GM10248 (cell line): ENCODE measurements at regions of chr9 and their contacts with region 1.

Region 1: GRCh38 chr9:136671646-136672430 is 9.1 kb downstream of the EGFL7 start:
- DNase-seq: peak; percentile 81
- CTCF ChIP-seq: peak; percentile 94

Region 2: DNA sequence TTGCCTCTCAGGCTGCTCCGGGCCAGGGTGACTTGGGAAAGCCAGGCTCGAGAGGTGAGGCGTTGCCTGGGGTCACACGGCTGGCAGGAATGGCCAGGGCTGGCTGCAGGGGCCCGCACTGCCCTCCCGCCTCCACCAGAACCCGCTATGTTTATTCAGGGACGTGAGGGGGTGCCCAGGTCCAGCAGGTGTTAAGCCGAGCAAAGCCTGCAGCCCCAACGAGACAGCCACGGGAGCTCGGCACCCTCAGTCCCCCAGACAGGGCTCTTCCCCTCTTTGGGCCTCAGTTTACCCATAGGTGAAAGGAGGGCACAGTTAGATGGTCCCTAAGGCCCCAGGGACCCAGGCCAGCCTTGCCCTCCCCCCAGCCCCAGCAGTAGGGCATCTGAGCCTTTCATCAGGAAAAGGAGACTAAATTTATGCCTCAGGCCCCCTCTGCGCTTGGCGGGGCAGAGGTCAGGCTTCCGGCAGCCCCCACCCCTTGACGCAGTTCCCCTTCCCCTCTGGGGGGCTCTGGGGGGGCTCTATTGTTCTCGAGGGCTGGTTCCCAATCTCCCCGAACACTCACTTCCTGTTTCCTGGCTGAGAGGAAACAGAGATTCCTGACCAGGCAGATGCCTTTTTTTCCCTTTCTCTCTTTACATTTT is 16.2 kb before region 1 on chr9:
- CTCF ChIA-PET with region 1: interaction called, 16 read pairs
- POLR2A ChIA-PET with region 1: no interaction called
- DNase-seq: no peak
- CTCF ChIP-seq: no peak

Region 3: DNA sequence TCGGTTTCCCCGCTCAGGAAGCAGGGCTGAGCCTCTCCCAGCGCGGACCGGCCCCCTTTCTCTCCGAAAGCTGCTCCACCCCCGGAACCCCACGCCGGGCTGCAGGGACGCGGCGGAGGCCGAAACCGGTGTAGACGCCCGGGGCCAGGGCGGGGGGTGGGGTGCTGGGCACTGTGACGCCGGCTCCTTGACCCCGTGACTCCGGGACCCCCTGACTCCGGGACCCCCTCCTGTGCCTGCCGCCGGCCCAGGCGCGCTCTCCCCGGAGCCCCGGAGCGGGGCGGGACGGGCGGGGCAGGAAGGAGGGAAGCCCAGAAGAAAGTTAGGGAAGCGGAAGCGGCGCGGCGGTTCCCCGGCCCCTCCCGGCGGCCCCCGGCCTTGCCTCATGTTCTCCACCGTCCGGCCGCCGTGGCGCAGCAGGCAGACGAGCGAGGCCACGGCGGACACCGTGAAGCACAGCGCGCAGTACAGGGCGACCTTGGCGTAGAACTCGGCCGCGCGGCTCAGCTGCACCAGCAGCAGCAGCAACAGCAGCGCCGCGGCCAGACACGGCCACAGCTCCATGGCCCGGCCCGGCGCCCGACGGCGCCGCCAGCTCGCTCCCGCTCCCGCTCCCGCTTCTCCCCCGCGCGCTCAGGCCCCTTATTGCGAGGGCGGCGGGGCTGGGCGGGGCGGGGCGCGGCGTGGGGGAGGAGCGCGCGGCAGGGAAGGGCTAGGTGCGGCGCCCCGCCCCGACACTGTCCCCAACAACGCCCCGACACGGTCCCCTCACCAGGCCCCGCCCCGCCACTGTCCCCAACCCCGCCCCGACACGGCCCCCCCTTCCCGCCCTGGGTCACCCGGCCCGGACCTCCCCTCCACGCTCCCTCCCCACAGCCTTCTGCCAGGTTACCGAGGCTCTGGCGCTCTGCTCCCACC is 15.2 kb after region 1 on chr9 and contains the start of gene AGPAT2:
- CTCF ChIA-PET with region 1: interaction called, 44 read pairs
- POLR2A ChIA-PET with region 1: no interaction called
- DNase-seq: peak; percentile 95
- CTCF ChIP-seq: no peak

Region 4: DNA sequence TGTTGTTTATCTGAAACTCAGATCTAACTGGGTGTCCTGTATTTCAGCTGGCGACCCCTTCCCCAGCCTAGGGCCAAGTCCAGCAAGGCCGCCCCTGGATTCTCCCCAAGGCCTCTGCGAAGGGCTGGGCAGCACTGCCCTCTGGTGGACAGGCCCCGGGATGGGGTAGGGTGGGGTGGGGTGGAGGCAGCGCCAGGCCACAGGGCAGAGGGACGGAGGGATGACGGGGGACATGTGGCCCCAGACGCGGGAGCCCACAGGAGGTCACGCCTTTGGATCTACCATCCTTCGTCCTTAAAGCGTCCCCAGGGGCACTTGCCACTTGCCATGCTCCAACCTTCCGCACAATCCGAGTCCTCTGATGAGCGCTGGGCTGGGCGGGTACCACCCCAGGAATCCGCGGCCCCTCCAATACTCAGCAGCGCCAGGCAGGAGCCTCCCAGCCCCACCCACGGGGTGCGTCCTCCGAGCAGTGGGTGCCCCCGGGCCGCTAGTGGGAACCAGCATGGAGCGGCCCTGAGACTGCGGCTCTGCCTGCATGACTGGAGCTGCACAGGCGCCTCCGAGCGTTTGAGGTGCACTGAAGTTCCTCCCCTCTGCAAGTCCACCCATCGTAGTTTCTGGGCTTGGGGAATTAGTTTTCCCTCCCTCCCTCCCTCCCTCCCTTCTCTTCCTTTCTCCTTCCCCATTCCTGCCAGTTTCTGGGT is 22.6 kb after region 1 on chr9:
- CTCF ChIA-PET with region 1: interaction called, 20 read pairs
- POLR2A ChIA-PET with region 1: no interaction called
- DNase-seq: peak; percentile 75
- CTCF ChIP-seq: peak; percentile 63